ENCODE measurements at regions of chr18 and their contacts with region 1.

Region 1: GRCh38 chr18:34661464-34662111 is 48.5 kb upstream of the DTNA start:
- DNase-seq: no peak
- ATAC-seq: no peak
- H3K4me3 Mint-ChIP-seq: no peak overlapping the region
- H3K27ac Mint-ChIP-seq: no peak overlapping the region
- H3K4me1 Mint-ChIP-seq: no peaks in the 10 kb centered on the region
- H3K27me3 Mint-ChIP-seq: peaks cover 12% of the 10 kb centered on the region

Region 2: GRCh38 chr18:34647251-34647650 is 14.3 kb before region 1 on chr18:
- CTCF ChIA-PET with region 1: interaction called, 16 read pairs
- POLR2A ChIA-PET with region 1: no interaction called
- DNase-seq: no peak
- ATAC-seq: no peak
- H3K4me3 Mint-ChIP-seq: no peak overlapping the region
- H3K27ac Mint-ChIP-seq: no peak overlapping the region
- H3K4me1 Mint-ChIP-seq: no peaks in the 10 kb centered on the region
- H3K27me3 Mint-ChIP-seq: peaks cover 10% of the 10 kb centered on the region

Region 3: DNA sequence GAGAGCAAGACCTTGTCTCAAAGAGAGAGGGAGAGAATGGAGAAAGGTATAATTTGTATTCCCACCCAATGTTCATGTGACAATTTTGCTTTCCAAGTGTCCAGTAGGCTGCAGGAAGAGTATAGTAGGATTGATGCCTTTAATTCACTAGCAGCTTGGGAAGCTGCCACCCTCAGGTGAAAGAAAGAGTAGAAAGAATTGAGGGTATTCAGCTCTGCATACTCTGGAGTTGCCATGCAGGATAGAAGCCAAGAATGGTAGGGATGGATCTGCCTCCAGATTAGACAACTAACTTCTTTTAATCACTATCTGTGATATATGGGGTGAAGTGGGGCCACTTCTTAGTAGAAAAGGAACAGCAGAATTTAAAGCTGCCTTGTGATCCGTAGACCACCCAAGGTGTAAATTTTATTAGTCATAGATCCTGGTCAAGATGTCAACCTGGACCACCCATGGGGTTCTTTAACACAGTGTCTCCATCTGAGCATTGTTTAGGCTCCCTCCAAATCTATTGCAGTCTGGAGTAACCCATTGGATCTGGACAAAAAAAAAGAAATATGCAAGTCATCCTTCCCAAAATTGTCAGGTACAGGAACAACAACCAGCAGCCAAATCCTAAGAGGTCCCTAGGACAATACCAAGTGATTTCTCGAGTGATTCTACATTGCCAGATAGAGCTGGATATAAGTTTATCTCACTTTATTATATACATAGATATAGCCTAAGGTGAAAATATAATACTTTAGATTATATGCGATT is 15.4 kb after region 1 on chr18:
- CTCF ChIA-PET with region 1: interaction called, 12 read pairs
- POLR2A ChIA-PET with region 1: no interaction called
- DNase-seq: no peak
- ATAC-seq: no peak
- H3K4me3 Mint-ChIP-seq: no peak overlapping the region
- H3K27ac Mint-ChIP-seq: no peak overlapping the region
- H3K4me1 Mint-ChIP-seq: no peaks in the 10 kb centered on the region
- H3K27me3 Mint-ChIP-seq: no peaks in the 10 kb centered on the region

Region 4: GRCh38 chr18:34787931-34788532 is 126.4 kb after region 1 on chr18:
- CTCF ChIA-PET with region 1: interaction called, 31 read pairs
- POLR2A ChIA-PET with region 1: no interaction called
- DNase-seq: peak; percentile 58
- ATAC-seq: peak; percentile 47
- H3K4me3 Mint-ChIP-seq: no peak overlapping the region
- H3K27ac Mint-ChIP-seq: no peak overlapping the region
- H3K4me1 Mint-ChIP-seq: no peaks in the 10 kb centered on the region
- H3K27me3 Mint-ChIP-seq: peaks cover 10% of the 10 kb centered on the region